Head of caudate nucleus (tissue), 42 donors: ENCODE measurements at regions of chr7 and their contacts with region 1.

Region 1: GRCh38 chr7:29461996-29462395 is 101.6 kb upstream of the PRR15 start:
- DNase-seq: no peak

Region 2: DNA sequence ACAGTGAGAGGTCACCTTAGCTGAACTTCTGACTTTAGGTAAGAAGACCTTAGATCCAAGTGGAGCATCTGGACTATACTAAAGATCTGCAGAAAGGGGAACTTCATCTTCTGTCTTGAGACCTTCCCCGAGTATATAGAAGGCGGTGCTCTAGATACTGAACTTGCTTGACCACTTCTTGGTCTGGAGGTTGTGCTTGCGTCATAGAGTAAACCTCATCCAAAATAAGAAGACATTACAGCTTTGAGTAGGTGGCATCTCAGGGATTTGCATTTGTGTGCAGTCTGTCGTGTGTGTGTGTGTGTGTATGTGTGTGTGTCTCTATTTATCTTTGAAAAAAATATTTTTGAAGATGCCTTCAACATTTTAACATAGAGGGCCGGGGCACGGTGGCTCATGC is 109.9 kb before region 1 on chr7:
- intact Hi-C with region 1: no loop called
- DNase-seq: no peak

Region 3: DNA sequence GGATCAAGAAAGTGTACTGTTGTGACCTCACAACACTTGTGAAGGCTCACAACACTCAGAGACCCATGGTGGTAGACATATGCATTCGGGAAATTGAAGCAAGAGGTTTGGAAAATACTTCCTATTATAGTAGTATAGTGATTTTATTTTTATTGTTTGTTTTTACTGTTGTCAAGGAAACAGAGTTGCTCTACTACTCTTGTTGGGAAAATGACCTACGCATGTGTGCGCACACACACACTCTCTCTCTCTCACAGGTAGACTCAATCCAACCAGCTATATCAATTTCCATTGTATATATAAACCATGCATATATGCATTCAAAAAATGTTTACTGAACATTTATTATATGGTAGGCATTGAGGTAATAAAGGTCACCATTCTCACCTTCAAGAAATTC is 37.9 kb after region 1 on chr7:
- intact Hi-C with region 1: loop called (anchors 2 kb)
- DNase-seq: no peak

Region 4: GRCh38 chr7:29921404-29922010 is 459.5 kb after region 1 on chr7:
- intact Hi-C with region 1: no loop called
- DNase-seq: peak in 19 of 42 donors; percentile 42 to 81 (median 61)